Ascending aorta (tissue), 2 donors: ENCODE measurements at regions of chr15 and their contacts with region 1.

Region 1: GRCh38 chr15:87619161-87619960 is 637.2 kb downstream of the NTRK3 start:
- DNase-seq: peak in 1 of 2 donors; percentile 71
- H3K4me3 ChIP-seq: no peak overlapping the region
- H3K27ac ChIP-seq: peak overlapping the region; percentile 28 to 79
- H3K4me1 ChIP-seq: peaks cover 4 to 17% of the 10 kb centered on the region in 2 donors
- H3K27me3 ChIP-seq: no peaks in the 10 kb centered on the region
- CTCF ChIP-seq: no peak

Region 2: GRCh38 chr15:87401973-87402372 is 217.4 kb before region 1 on chr15:
- intact Hi-C with region 1: no loop called
- DNase-seq: no peak
- H3K4me3 ChIP-seq: no peak overlapping the region
- H3K27ac ChIP-seq: no peak overlapping the region
- H3K4me1 ChIP-seq: no peaks in the 10 kb centered on the region
- H3K27me3 ChIP-seq: no peaks in the 10 kb centered on the region
- CTCF ChIP-seq: no peak

Region 3: GRCh38 chr15:88258093-88258641 is 638.8 kb after region 1 on chr15:
- intact Hi-C with region 1: loop called (anchors 5 kb)
- DNase-seq: peak in 1 of 2 donors; percentile 90
- H3K4me3 ChIP-seq: peak overlapping the region; percentile 76 to 79
- H3K27ac ChIP-seq: peak overlapping the region; percentile 83 to 86
- H3K4me1 ChIP-seq: peaks cover 4 to 12% of the 10 kb centered on the region in 2 donors
- H3K27me3 ChIP-seq: no peaks in the 10 kb centered on the region
- CTCF ChIP-seq: peak in 2 of 3 experiments; percentile 41 to 60

Region 4: DNA sequence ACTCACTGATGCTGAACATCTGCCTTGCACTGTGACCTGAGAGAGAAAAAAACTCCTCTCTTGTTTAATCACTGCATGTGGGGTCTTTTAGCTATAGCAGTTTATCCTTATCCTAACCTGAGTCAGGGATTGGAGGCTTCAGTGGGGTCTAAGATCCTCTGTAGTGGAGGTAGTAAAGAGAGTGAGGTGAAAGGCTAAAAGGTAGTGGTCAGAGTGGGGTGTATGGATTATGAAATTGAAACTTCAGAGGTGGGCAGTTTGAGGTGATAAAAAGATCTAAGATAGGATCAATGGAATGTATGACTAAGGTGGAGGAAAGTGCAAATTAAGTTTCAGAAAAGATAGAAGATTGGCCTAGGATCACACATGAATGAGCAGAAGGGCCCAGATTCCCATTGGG is 890.6 kb after region 1 on chr15:
- intact Hi-C with region 1: no loop called
- DNase-seq: no peak
- H3K4me3 ChIP-seq: no peak overlapping the region
- H3K27ac ChIP-seq: no peak overlapping the region
- H3K4me1 ChIP-seq: no peaks in the 10 kb centered on the region
- H3K27me3 ChIP-seq: no peaks in the 10 kb centered on the region
- CTCF ChIP-seq: no peak

Region 5: GRCh38 chr15:88604381-88605188 is 985.2 kb after region 1 on chr15:
- intact Hi-C with region 1: no loop called
- DNase-seq: no peak
- H3K4me3 ChIP-seq: no peak overlapping the region
- H3K27ac ChIP-seq: no peak overlapping the region
- H3K4me1 ChIP-seq: no peaks in the 10 kb centered on the region
- H3K27me3 ChIP-seq: peaks cover 17% of the 10 kb centered on the region
- CTCF ChIP-seq: no peak